Activated T-helper 2 cell treated with anti-CD3 and anti-CD28 coated beads, Interferon-gamma antibody, Interleukin-2, Interleukin-4, amounts not matched to agents 10 μg/mL and 5 μg/mL and 100 μg/mL, durations not matched to agents 14 hours and 24 hours and 36 hours (primary cell): ENCODE measurements at regions of chr14 and their contacts with region 1.

Region 1: GRCh38 chr14:71331403-71331802 is 424.1 kb downstream of the PCNX1 start:
- DNase-seq: no peak
- H3K4me3 Mint-ChIP-seq: no peak overlapping the region
- H3K27ac Mint-ChIP-seq: peak overlapping the region; percentile 65
- H3K4me1 Mint-ChIP-seq: peaks cover 58% of the 10 kb centered on the region
- H3K27me3 Mint-ChIP-seq: no peaks in the 10 kb centered on the region

Region 2: GRCh38 chr14:71355324-71356201 is 24.2 kb after region 1 on chr14:
- intact Hi-C with region 1: loop called (anchors 2 kb)
- DNase-seq: no peak
- H3K4me3 Mint-ChIP-seq: no peak overlapping the region
- H3K27ac Mint-ChIP-seq: no peak overlapping the region
- H3K4me1 Mint-ChIP-seq: peaks cover 44% of the 10 kb centered on the region
- H3K27me3 Mint-ChIP-seq: no peaks in the 10 kb centered on the region

Region 3: GRCh38 chr14:71399057-71399487 is 67.7 kb after region 1 on chr14:
- intact Hi-C with region 1: loop called (anchors 2 kb)
- DNase-seq: no peak
- H3K4me3 Mint-ChIP-seq: peak overlapping the region; percentile 37
- H3K27ac Mint-ChIP-seq: peak overlapping the region; percentile 92
- H3K4me1 Mint-ChIP-seq: peaks cover 54% of the 10 kb centered on the region
- H3K27me3 Mint-ChIP-seq: no peaks in the 10 kb centered on the region

Region 4: GRCh38 chr14:71452539-71452938 is 121.1 kb after region 1 on chr14:
- intact Hi-C with region 1: loop called (anchors 5 kb)
- DNase-seq: no peak
- H3K4me3 Mint-ChIP-seq: no peak overlapping the region
- H3K27ac Mint-ChIP-seq: peak overlapping the region; percentile 14
- H3K4me1 Mint-ChIP-seq: peaks cover 32% of the 10 kb centered on the region
- H3K27me3 Mint-ChIP-seq: no peaks in the 10 kb centered on the region